ENCODE measurements at regions of chr16 and their contacts with region 1.

Region 1: GRCh38 chr16:72832621-72833248 is 215.2 kb downstream of the ZFHX3 start:
- DNase-seq: peak; percentile 59
- ATAC-seq: peak; percentile 87
- H3K4me3 ChIP-seq: no peak overlapping the region
- H3K27ac ChIP-seq: no peak overlapping the region
- H3K4me1 ChIP-seq: no peaks in the 10 kb centered on the region
- H3K27me3 ChIP-seq: no peaks in the 10 kb centered on the region
- CTCF ChIP-seq: peak; percentile 96

Region 2: DNA sequence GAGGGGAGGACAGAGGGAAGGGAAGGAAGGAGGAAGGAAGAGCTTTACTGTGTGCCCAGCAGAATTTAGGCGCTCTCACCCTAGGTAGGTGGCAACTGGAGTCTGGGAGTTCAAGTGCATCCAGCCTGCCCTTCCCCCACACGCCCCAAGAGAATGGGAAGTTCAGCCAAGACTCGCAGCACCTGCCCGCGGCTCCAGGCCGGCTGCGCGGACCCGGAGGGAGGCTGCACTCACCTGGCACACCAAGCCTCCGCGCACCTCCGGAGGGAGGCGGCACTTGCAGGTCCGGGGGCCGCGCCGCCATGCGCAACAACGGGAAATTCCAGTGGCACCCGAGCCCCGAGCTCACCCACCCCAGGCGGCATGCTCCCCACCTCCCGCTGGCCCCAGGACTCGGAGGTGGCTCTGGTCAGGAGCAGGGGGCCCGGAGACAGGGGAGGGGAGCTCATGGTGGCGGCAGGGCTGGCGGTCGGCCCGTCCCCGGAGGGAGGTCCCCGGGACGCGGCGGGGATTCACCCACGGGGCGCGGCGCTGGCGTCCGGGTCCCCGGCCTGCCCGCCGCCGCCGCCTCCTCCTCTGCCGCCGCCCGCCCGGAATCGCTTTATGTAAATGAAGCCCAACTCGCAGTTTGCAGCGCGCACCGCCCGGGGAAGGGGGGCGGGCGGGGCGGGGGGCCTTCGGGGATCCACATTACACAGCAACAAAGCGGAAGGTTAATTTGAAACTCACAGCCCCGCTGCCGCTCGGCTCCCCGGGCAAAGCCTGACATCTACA is 215.0 kb after region 1 on chr16 and contains the start of gene ZFHX3:
- CTCF ChIA-PET with region 1: no interaction called
- POLR2A ChIA-PET with region 1: no interaction called
- in situ Hi-C with region 1: no loop called
- intact Hi-C with region 1: loop called (anchors 10 kb)
- DNase-seq: no peak
- ATAC-seq: peak; percentile 72
- H3K4me3 ChIP-seq: peak within 1 kb of the TSS; percentile 56 to 57
- H3K27ac ChIP-seq: peak within 1 kb of the TSS; percentile 83
- H3K4me1 ChIP-seq: peaks cover 55% of the 10 kb centered on the region
- H3K27me3 ChIP-seq: no peaks in the 10 kb centered on the region
- CTCF ChIP-seq: no peak; the same call in 1 of the 2 replicates
- total RNA-seq, gene ZFHX3: 7.1 TPM

Measured in Panc1 (cell line).